ENCODE measurements at regions of chr1 and their contacts with region 1.

Region 1: DNA sequence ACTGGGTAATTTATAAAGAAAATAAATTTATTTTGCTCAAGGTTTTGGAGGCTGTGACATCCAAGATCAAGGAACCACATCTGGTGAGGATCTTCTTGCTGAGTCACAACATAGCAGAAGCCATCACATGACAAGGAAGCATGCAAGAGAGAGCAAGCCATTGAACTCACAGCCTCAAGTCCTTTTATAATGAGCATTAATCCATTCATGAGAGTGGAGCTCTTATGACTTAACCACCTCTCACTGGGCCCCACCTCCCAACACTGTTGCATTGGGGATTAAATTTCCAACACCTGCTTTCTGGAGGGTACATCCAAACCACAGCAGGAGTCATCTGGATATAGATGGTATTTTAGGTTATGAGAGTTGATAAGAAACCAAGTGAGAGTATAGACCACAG is 20.6 kb upstream of the EGLN1 start:
- DNase-seq: no peak
- ATAC-seq: no peak
- H3K4me3 ChIP-seq: no peak overlapping the region
- H3K27ac ChIP-seq: no peak overlapping the region
- H3K4me1 ChIP-seq: no peaks in the 10 kb centered on the region
- H3K27me3 ChIP-seq: peaks cover 0 to 9% (median 0%) of the 10 kb centered on the region in 9 donors
- CTCF ChIP-seq: no peak
- POLR2A ChIP-seq: no peak

Region 2: GRCh38 chr1:231507476-231508355 is 65.0 kb after region 1 on chr1:
- intact Hi-C with region 1: loop called in 1 of 10 experiments (anchors 10 kb)
- DNase-seq: no peak
- ATAC-seq: peak in 1 of 4 donors; percentile 72
- H3K4me3 ChIP-seq: no peak overlapping the region
- H3K27ac ChIP-seq: no peak overlapping the region
- H3K4me1 ChIP-seq: peaks cover 0 to 8% (median 0%) of the 10 kb centered on the region in 12 donors
- H3K27me3 ChIP-seq: no peaks in the 10 kb centered on the region
- CTCF ChIP-seq: no peak
- POLR2A ChIP-seq: no peak